ENCODE measurements at regions of chr6 and their contacts with region 1.

Region 1: GRCh38 chr6:151765444-151765886 is 42.0 kb upstream of the ESR1 start:
- DNase-seq: no peak
- ATAC-seq: peak; percentile 80
- H3K4me3 ChIP-seq: no peak overlapping the region
- H3K27ac ChIP-seq: no peak overlapping the region
- H3K4me1 ChIP-seq: no peaks in the 10 kb centered on the region
- H3K27me3 ChIP-seq: peaks cover 0 to 5% of the 10 kb centered on the region in 2 experiments; a peak in 1 of 4 replicates
- CTCF ChIP-seq: peak; percentile 60 to 76 (median 64)
- EP300 ChIP-seq: no peak
- POLR2A ChIP-seq: no peak
- RAD21 ChIP-seq: peak; percentile 71

Region 2: GRCh38 chr6:151675746-151676416 is 89.6 kb before region 1 on chr6:
- CTCF ChIA-PET with region 1: interaction called, 19 read pairs
- POLR2A ChIA-PET with region 1: no interaction called
- RAD21 ChIA-PET with region 1: interaction called, 6 read pairs
- SMC1A ChIA-PET with region 1: interaction called, 7 read pairs
- in situ Hi-C with region 1: no loop called
- intact Hi-C with region 1: loop called (anchors 2 kb)
- DNase-seq: peak; percentile 11
- ATAC-seq: peak; percentile 96
- H3K4me3 ChIP-seq: no peak overlapping the region
- H3K27ac ChIP-seq: no peak overlapping the region
- H3K4me1 ChIP-seq: peaks cover 5% of the 10 kb centered on the region; the same call in 1 of the 2 replicates
- H3K27me3 ChIP-seq: no peaks in the 10 kb centered on the region
- CTCF ChIP-seq: peak; percentile 95 to 99 (median 96)
- EP300 ChIP-seq: no peak
- POLR2A ChIP-seq: no peak
- RAD21 ChIP-seq: peak; percentile 90

Region 3: GRCh38 chr6:151729829-151730495 is 35.5 kb before region 1 on chr6:
- CTCF ChIA-PET with region 1: interaction called, 10 read pairs
- POLR2A ChIA-PET with region 1: no interaction called
- RAD21 ChIA-PET with region 1: interaction called, 4 read pairs
- SMC1A ChIA-PET with region 1: interaction called, 9 read pairs
- in situ Hi-C with region 1: no loop called
- intact Hi-C with region 1: no loop called
- DNase-seq: no peak
- ATAC-seq: peak; percentile 79
- H3K4me3 ChIP-seq: no peak overlapping the region
- H3K27ac ChIP-seq: no peak overlapping the region
- H3K4me1 ChIP-seq: no peaks in the 10 kb centered on the region
- H3K27me3 ChIP-seq: no peaks in the 10 kb centered on the region
- CTCF ChIP-seq: no peak
- EP300 ChIP-seq: no peak
- POLR2A ChIP-seq: no peak
- RAD21 ChIP-seq: no peak

Region 4: DNA sequence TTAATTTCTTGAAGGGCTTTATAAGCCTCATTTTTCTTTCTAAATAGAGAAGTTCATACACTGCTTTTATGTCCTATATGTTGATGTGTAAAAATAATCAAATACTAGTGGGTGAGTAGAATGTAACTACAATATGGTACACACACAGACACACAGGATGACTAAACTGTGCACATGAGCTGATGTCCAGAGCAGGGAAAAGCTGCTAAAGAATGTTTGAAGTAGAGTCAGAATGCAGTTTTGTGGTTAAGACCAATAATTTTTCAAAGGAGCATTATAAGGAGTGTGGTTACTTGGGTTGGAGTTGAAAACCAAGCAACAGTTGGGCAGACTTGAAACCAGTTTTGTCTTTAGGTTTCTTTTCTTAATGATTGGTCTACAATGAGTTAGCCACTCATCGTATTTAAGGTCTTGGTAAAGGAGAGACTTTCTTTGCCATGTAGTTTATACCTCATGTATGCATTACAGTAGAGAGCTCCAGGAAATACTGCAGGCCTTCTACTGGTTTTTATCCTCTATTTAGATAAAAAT is 238.6 kb after region 1 on chr6:
- CTCF ChIA-PET with region 1: no interaction called
- POLR2A ChIA-PET with region 1: no interaction called
- RAD21 ChIA-PET with region 1: no interaction called
- SMC1A ChIA-PET with region 1: no interaction called
- in situ Hi-C with region 1: no loop called
- intact Hi-C with region 1: no loop called
- DNase-seq: no peak
- ATAC-seq: no peak
- H3K4me3 ChIP-seq: no peak overlapping the region
- H3K27ac ChIP-seq: no peak overlapping the region
- H3K4me1 ChIP-seq: no peaks in the 10 kb centered on the region
- H3K27me3 ChIP-seq: no peaks in the 10 kb centered on the region; a peak in 1 of 4 replicates
- CTCF ChIP-seq: no peak
- EP300 ChIP-seq: no peak
- POLR2A ChIP-seq: no peak
- RAD21 ChIP-seq: no peak

Region 5: GRCh38 chr6:152117156-152118133 is 352.0 kb after region 1 on chr6:
- CTCF ChIA-PET with region 1: interaction called, 100 read pairs
- POLR2A ChIA-PET with region 1: no interaction called
- RAD21 ChIA-PET with region 1: interaction called, 3 read pairs
- SMC1A ChIA-PET with region 1: interaction called, 5 read pairs
- in situ Hi-C with region 1: loop called (anchors 10 kb)
- intact Hi-C with region 1: no loop called
- DNase-seq: no peak
- ATAC-seq: peak; percentile 83
- H3K4me3 ChIP-seq: no peak overlapping the region
- H3K27ac ChIP-seq: no peak overlapping the region
- H3K4me1 ChIP-seq: 0 out of 2 replicates have a peak, but pooled peaks cover 4% of the 10 kb centered on the region
- H3K27me3 ChIP-seq: no peaks in the 10 kb centered on the region
- CTCF ChIP-seq: no peak
- EP300 ChIP-seq: no peak
- POLR2A ChIP-seq: no peak
- RAD21 ChIP-seq: no peak

Region 6: DNA sequence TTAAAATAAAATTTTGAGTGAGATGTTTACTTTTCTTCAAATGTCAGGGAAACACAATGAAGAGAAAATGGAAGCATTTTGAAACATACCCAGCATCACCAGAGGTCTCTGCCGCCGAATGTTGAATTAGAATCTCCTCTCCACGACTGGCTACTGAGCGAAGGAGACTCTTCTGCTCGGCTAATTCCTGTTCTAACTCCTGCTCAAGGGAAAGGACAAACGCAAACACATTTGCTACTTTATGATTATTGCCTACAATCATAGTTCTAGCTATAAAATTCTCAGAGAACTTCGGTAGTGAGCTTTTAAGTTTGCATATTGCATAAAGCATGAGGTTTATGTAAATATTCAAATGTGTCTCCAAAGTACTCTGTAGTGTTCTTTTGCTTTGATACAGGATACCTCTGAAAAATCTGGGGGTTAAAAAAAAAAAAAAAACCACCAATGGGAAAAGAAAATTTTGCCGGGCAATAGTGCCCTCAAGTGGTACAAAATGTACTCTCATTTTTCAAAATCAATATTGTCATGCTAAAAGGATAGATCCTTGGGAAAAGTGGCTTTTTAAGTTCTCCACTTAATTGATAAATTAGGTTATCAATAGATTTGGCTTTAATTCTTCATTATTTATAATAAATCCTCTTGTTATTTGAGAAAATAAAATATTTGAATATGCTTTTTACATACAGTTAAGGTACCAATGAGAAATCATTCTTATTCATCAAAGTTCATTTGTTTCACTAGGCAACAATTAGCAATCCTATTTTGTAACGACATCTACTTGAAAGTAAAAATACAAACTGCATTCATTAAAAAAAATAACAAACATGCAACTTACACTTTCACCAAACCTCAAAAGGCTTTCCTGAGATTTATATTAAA is 502.7 kb after region 1 on chr6:
- CTCF ChIA-PET with region 1: interaction called, 19 read pairs
- POLR2A ChIA-PET with region 1: no interaction called
- RAD21 ChIA-PET with region 1: interaction called, 15 read pairs
- SMC1A ChIA-PET with region 1: interaction called, 10 read pairs
- in situ Hi-C with region 1: loop called (anchors 5 kb)
- intact Hi-C with region 1: loop called (anchors 1 kb)
- DNase-seq: no peak
- ATAC-seq: no peak
- H3K4me3 ChIP-seq: no peak overlapping the region
- H3K27ac ChIP-seq: no peak overlapping the region
- H3K4me1 ChIP-seq: peaks cover 9% of the 10 kb centered on the region; the same call in 1 of the 2 replicates
- H3K27me3 ChIP-seq: no peaks in the 10 kb centered on the region
- CTCF ChIP-seq: peak; percentile 24 to 61 (median 38); a peak in 3 of 6 replicates
- EP300 ChIP-seq: no peak
- POLR2A ChIP-seq: no peak
- RAD21 ChIP-seq: peak; percentile 79

Region 7: GRCh38 chr6:152356451-152357061 is 591.1 kb after region 1 on chr6:
- CTCF ChIA-PET with region 1: interaction called, 4 read pairs
- POLR2A ChIA-PET with region 1: no interaction called
- RAD21 ChIA-PET with region 1: interaction called, 3 read pairs
- SMC1A ChIA-PET with region 1: interaction called, 5 read pairs
- in situ Hi-C with region 1: loop called (anchors 5 kb)
- intact Hi-C with region 1: loop called (anchors 5 kb)
- DNase-seq: no peak
- ATAC-seq: peak; percentile 78
- H3K4me3 ChIP-seq: no peak overlapping the region
- H3K27ac ChIP-seq: no peak overlapping the region
- H3K4me1 ChIP-seq: no peaks in the 10 kb centered on the region
- H3K27me3 ChIP-seq: no peaks in the 10 kb centered on the region
- CTCF ChIP-seq: peak; percentile 28 to 53 (median 47); a peak in 4 of 6 replicates
- EP300 ChIP-seq: no peak
- POLR2A ChIP-seq: no peak
- RAD21 ChIP-seq: peak; percentile 67

Measured in GM12878 (cell line).